Caco-2 (cell line): ENCODE measurements at regions of chr12 and their contacts with region 1.

Region 1: GRCh38 chr12:63276537-63277365 is 125.8 kb upstream of the AVPR1A start:
- DNase-seq: peak; percentile 56 to 68
- H3K4me3 ChIP-seq: no peak overlapping the region
- H3K4me3 Mint-ChIP-seq: no peak overlapping the region
- H3K27ac Mint-ChIP-seq: no peak overlapping the region
- H3K4me1 ChIP-seq: peaks cover 5% of the 10 kb centered on the region; the same call in 1 of the 2 replicates
- H3K4me1 Mint-ChIP-seq: peaks cover 7% of the 10 kb centered on the region
- H3K27me3 ChIP-seq: no peaks in the 10 kb centered on the region
- H3K27me3 Mint-ChIP-seq: no peaks in the 10 kb centered on the region
- CTCF ChIP-seq: peak; percentile 71

Region 2: DNA sequence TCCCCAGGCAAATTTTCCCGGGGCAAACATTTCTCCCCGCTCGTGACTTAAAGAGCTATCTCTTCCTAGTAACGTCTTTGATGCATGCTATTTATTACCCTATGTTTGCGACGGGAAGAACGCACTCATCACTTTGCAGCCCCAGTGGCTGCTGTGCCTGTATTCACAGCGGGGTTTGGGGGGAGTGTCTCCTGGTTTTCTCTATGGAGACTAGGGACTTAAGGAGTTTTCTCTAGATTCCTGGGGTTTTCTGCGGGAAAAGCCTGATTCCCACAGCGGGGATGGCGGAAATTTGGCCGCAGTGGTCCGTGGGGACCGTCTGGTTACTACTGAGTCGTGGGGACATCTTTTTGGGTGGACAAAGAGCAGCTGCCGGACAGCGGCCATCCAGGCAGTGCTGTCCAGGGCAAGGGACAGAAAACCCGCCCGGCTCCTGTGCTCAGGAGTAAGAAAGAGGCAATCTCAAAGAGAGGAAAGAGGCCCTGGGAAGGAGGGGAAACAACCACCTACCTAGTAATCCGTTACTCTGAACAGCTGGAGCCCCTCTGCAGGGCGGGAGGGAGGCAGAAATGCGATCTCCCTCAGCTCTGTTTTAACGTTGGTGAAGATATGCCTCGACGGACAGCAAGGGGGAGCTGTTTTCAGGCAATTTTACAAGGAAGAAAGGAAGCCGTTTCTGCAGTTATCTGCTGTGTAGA is 125.0 kb before region 1 on chr12:
- CTCF ChIA-PET with region 1: interaction called, 10 read pairs
- POLR2A ChIA-PET with region 1: no interaction called
- intact Hi-C with region 1: loop called (anchors 1 kb)
- DNase-seq: peak; percentile 35 to 40
- H3K4me3 ChIP-seq: no peak overlapping the region
- H3K4me3 Mint-ChIP-seq: no peak overlapping the region
- H3K27ac Mint-ChIP-seq: no peak overlapping the region
- H3K4me1 ChIP-seq: no peaks in the 10 kb centered on the region
- H3K4me1 Mint-ChIP-seq: no peaks in the 10 kb centered on the region
- H3K27me3 ChIP-seq: no peaks in the 10 kb centered on the region
- H3K27me3 Mint-ChIP-seq: no peaks in the 10 kb centered on the region
- CTCF ChIP-seq: peak; percentile 59 to 74